ENCODE measurements at regions of chr20 and their contacts with region 1.

Region 1: GRCh38 chr20:1802385-1803060 is 92.7 kb upstream of the SIRPA start:
- DNase-seq: peak; percentile 52
- H3K4me3 ChIP-seq: peak overlapping the region; percentile 12 to 37 (median 26)
- H3K27ac ChIP-seq: no peak overlapping the region
- H3K4me1 ChIP-seq: peaks cover 38% of the 10 kb centered on the region
- H3K27me3 ChIP-seq: no peaks in the 10 kb centered on the region
- CTCF ChIP-seq: peak; percentile 50 to 75

Region 2: GRCh38 chr20:1764136-1765033 is 38.1 kb before region 1 on chr20:
- CTCF ChIA-PET with region 1: interaction called, 4 read pairs
- dilution Hi-C with region 1: no loop called
- in situ Hi-C with region 1: no loop called
- intact Hi-C with region 1: loop called (anchors 1 kb)
- DNase-seq: peak; percentile 66
- H3K4me3 ChIP-seq: no peak overlapping the region
- H3K27ac ChIP-seq: no peak overlapping the region
- H3K4me1 ChIP-seq: peaks cover 18% of the 10 kb centered on the region
- H3K27me3 ChIP-seq: no peaks in the 10 kb centered on the region
- CTCF ChIP-seq: peak; percentile 86 to 91

Region 3: DNA sequence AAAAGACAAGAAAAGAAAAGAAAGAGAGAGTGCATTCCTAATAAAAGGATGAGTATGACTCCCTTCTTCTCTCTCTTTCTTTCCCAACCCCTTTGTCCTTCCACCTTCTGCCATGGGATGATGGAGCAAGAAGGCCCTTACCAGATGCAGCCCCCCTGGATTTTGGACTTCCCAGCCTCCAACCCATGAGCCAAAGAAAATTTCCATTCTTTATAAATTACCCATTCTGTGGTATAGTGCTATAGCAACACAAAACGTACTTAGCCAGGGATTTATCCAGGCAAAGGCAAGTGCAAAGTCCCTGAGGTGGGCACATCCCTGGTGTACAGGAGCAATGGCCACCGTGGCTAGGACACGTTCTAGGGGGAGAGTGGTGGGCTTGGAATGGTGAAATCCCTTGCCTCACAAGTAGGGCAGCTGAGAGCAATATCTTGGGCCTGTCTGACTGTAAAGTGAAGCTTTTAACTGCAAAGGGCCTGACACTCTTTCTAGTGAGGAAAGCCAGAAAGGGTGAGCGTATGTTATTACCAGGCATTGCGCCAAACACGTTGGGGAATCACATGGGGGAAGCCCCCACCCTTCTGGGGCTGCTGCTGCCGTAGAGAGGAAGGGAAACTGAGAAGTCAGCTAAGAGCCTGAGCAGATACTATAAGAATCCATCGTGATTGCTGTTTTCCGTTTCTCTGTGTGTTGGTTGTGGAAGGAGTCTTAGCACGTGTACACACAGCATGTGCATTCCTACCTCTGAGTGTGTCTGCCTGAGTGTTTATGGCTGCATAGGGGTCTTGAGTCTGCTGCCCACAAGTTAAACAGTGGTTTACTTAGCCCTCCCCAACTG is 42.0 kb after region 1 on chr20:
- CTCF ChIA-PET with region 1: no interaction called
- dilution Hi-C with region 1: loop called (anchors 5 kb)
- in situ Hi-C with region 1: no loop called
- intact Hi-C with region 1: no loop called
- DNase-seq: no peak
- H3K4me3 ChIP-seq: no peak overlapping the region
- H3K27ac ChIP-seq: no peak overlapping the region
- H3K4me1 ChIP-seq: peaks cover 12% of the 10 kb centered on the region
- H3K27me3 ChIP-seq: no peaks in the 10 kb centered on the region
- CTCF ChIP-seq: no peak

Region 4: DNA sequence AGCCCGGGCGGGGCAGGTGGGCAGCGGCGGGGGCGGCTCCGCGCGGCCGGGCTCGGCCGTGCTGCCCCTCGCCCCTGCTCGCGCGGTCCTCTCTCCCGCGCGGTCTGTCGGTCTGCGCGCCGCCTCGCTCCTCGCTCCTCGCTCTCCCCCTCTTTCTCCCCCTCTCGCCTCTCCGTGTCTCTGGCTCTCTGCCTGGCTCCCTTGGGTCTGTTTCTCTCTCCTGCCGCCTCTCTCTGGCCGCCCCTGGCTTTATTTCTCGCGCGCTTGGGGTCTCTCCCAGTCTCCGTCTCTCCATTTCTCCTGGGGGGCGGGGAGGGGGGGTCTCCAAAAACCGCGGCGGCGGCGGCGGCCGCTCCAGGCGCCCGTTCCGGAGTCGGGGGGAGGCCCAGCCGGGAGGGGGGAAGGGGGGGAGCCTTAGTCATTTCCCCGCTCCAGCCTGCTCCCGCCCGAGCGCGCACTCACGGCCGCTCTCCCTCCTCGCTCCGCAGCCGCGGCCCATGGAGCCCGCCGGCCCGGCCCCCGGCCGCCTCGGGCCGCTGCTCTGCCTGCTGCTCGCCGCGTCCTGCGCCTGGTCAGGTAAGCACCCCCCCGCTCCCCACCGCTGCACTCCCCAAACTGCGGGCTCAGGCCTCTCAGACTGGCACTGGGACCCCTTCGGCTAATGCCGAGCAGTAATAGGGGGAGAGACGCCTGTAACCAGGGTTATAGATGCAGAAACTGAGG is 92.6 kb after region 1 on chr20 and contains the start of gene SIRPA:
- CTCF ChIA-PET with region 1: no interaction called
- dilution Hi-C with region 1: loop called (anchors 5 kb)
- in situ Hi-C with region 1: no loop called
- intact Hi-C with region 1: loop called (anchors 1 kb)
- DNase-seq: peak; percentile 67
- H3K4me3 ChIP-seq: peak within 1 kb of the TSS; percentile 68 to 85 (median 81)
- H3K27ac ChIP-seq: peak within 1 kb of the TSS; percentile 75
- H3K4me1 ChIP-seq: peaks cover 37% of the 10 kb centered on the region
- H3K27me3 ChIP-seq: no peaks in the 10 kb centered on the region
- CTCF ChIP-seq: no peak
- total RNA-seq, gene SIRPA: 49.6 to 68.3 TPM

Region 5: GRCh38 chr20:1952737-1953530 is 150.4 kb after region 1 on chr20:
- CTCF ChIA-PET with region 1: no interaction called
- dilution Hi-C with region 1: loop called (anchors 5 kb)
- in situ Hi-C with region 1: no loop called
- intact Hi-C with region 1: no loop called
- DNase-seq: no peak
- H3K4me3 ChIP-seq: no peak overlapping the region
- H3K27ac ChIP-seq: no peak overlapping the region
- H3K4me1 ChIP-seq: no peaks in the 10 kb centered on the region
- H3K27me3 ChIP-seq: no peaks in the 10 kb centered on the region
- CTCF ChIP-seq: no peak

Region 6: DNA sequence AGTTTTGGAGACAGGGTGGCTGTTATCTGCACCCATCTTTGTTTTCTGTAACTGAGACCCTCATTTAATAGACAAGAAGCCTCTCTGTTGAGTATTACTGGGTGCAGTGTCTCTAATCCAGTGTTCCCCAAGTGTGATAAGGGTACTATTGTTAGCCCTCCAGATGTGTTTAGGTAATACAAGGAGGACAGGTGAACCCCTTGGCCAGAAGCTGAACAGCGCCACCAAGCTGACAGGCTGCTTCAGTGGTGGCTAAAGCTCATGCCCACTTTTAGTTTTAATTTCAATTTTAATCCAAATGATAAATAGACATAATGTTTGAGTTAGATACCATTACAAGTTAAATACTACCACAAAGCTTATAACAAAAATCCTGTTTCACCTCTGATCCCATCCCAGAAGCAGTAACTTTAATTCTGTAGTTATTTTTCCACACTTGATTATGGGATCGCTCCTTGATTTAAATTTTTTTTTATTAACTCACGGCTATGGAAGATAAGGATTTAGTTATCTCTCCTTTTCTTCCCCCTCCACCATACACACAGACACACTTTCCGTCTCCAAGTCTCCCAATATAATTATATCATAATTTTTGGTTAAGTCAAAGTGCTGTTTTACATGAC is 290.7 kb after region 1 on chr20:
- CTCF ChIA-PET with region 1: interaction called, 3 read pairs
- dilution Hi-C with region 1: no loop called
- in situ Hi-C with region 1: no loop called
- intact Hi-C with region 1: loop called (anchors 1 kb)
- DNase-seq: peak; percentile 9
- H3K4me3 ChIP-seq: no peak overlapping the region
- H3K27ac ChIP-seq: no peak overlapping the region
- H3K4me1 ChIP-seq: no peaks in the 10 kb centered on the region
- H3K27me3 ChIP-seq: no peaks in the 10 kb centered on the region
- CTCF ChIP-seq: peak; percentile 87 to 89